ENCODE measurements at regions of chr2 and their contacts with region 1.

Region 1: DNA sequence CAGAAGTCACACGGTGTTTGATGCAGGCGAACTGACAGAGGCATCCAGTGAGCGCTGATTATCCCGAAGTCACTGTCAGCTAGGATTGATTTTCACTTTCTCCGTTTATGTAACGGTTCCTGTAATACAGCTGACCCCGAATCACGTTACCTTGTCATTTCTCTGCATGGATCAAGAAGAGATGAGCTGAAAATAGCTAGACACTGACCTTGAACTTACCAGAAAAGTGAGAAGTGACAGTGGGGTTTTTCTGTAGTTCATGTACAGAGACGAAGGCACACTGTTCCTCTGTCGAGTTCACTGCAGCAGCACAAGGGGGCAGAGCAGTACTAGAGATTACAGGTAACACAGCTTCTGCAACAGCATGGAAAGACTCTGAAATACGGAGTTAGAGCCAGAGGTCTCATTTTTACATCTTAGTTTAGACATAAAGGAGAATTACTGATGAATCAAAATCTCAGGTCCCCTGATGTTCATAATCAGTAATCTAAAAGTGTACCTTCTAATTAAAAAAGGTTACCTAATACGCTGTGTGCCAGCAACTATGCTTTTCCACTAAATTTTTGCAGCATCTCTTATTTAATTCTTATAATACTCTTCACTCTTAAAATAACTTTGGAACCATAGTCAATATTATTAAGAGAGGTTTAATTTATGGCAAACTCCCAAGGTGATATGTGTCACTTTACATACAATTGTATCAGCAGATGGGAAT is 33.1 kb downstream of the ARHGAP15 start:
- DNase-seq: peak; percentile 39
- H3K4me3 Mint-ChIP-seq: no peak overlapping the region
- H3K27ac Mint-ChIP-seq: peak overlapping the region; percentile 20
- H3K4me1 Mint-ChIP-seq: peaks cover 83% of the 10 kb centered on the region
- H3K27me3 Mint-ChIP-seq: no peaks in the 10 kb centered on the region

Region 2: DNA sequence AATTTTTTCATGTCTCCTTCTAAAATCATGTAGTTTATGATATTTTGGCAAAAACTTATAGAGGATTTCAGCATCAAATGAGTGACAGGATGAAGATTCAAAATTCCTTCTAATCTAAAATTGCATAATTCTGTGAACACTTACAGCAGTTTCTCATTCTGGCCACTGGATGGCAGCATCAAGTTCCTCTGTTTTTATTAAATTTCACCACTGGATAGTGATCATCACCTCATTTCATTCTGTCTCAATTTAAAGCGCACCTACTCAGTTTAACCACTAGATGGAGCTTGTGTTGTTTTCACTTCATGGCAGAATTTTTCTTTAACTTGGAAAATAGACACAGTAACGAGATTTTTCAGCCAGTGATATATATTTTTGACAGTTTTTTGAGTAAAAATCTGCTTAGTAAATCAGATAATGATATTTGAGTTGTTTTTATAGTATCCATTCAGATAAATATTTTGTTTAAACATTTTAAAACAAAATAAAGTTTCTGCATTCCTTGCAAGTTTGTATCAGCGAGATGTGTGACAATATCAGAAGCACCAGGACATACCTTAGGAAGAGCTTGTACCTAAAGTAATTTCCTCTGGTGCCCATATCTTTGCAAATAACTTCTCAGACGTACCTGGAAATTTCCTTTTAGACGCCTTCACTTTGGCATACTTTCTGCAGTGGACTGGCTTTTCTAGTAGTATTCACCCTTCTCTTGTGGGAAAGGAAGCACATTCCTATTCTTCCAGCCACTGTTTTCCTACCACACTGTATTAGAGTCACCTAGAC is 127.8 kb before region 1 on chr2:
- intact Hi-C with region 1: loop called (anchors 1 kb)
- DNase-seq: peak; percentile 48
- H3K4me3 Mint-ChIP-seq: no peak overlapping the region
- H3K27ac Mint-ChIP-seq: no peak overlapping the region
- H3K4me1 Mint-ChIP-seq: peaks cover 9% of the 10 kb centered on the region
- H3K27me3 Mint-ChIP-seq: no peaks in the 10 kb centered on the region

Region 3: DNA sequence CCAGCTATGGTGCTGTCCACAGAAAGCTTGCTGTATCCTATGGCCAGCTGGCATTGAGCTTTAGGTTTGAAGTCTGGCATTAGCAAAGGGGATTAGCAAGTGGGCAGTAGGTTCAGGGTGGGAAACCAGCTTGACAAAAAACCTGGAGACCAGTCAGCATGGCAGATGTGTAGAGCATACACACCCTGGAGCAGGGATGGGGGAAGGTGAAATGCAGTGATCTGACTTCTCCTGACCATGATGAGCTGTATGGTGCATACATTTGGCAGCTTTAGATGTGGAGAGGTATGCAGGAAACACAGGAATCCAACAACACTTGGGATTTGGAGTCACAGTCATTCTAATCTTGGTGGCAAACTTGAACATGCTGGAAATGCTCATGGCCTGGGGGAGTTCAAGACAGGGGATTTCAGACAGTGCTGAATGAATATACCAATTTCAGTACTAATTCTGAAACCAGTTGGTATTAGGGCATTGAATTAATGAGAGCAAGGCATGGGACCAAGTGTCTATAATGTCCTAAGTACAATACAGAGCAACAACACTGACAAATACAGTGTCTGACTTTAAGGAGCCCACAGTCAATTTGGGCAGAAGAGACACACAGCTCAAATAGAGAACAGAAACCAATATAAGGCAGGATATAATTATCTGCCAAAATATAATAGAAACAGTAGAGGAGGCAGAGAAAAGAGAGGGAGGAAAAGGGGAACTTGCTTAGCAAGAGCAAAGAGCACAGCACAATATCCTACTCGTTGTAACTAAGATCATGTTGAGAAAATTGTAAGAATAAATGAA is 21.2 kb before region 1 on chr2:
- intact Hi-C with region 1: loop called (anchors 2 kb)
- DNase-seq: no peak
- H3K4me3 Mint-ChIP-seq: no peak overlapping the region
- H3K27ac Mint-ChIP-seq: peak overlapping the region; percentile 84
- H3K4me1 Mint-ChIP-seq: peaks cover 93% of the 10 kb centered on the region
- H3K27me3 Mint-ChIP-seq: no peaks in the 10 kb centered on the region

Region 4: DNA sequence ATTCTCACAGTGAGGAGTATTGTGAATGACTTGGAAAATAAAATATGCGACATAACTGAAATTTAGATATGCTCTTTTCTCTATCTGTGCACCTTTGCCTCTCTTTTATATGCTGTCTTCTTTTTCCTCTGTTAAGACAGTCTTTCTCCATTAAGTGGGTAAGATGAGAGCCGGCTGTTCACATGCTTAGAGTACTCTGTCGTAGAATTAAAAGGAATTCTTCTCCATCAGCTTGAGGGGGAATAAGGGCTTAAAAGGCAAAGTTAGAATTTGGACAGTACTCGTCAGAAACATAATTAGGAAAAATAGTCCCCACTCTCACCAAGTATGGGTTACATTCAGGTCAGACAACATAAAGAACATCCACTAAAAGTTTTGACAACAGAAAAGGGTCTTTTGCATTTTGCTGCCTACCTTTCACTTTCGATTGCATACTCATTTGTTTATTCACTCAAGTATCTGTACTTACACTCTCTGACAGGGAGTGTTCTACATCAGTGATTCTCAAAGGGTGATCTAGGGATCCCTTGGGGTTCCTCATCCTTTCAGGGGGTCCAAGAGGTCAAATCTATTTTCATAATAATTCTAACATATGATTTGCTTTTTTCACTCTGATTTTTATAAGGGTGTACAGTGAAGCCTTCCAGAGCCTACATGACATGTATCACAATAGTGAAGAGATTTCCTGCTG is 15.0 kb after region 1 on chr2:
- intact Hi-C with region 1: loop called (anchors 2 kb)
- DNase-seq: no peak
- H3K4me3 Mint-ChIP-seq: peak overlapping the region; percentile 78
- H3K27ac Mint-ChIP-seq: peak overlapping the region; percentile 85
- H3K4me1 Mint-ChIP-seq: peaks cover 53% of the 10 kb centered on the region
- H3K27me3 Mint-ChIP-seq: no peaks in the 10 kb centered on the region

Region 5: GRCh38 chr2:143205106-143205764 is 43.0 kb after region 1 on chr2:
- intact Hi-C with region 1: loop called (anchors 2 kb)
- DNase-seq: no peak
- H3K4me3 Mint-ChIP-seq: no peak overlapping the region
- H3K27ac Mint-ChIP-seq: peak overlapping the region; percentile 41
- H3K4me1 Mint-ChIP-seq: peaks cover 44% of the 10 kb centered on the region
- H3K27me3 Mint-ChIP-seq: no peaks in the 10 kb centered on the region

Region 6: GRCh38 chr2:143217512-143218115 is 55.3 kb after region 1 on chr2:
- intact Hi-C with region 1: loop called (anchors 1 kb)
- DNase-seq: no peak
- H3K4me3 Mint-ChIP-seq: no peak overlapping the region
- H3K27ac Mint-ChIP-seq: peak overlapping the region; percentile 61
- H3K4me1 Mint-ChIP-seq: peaks cover 51% of the 10 kb centered on the region
- H3K27me3 Mint-ChIP-seq: no peaks in the 10 kb centered on the region

Region 7: GRCh38 chr2:143284087-143284675 is 121.9 kb after region 1 on chr2:
- intact Hi-C with region 1: loop called (anchors 1 kb)
- DNase-seq: no peak
- H3K4me3 Mint-ChIP-seq: no peak overlapping the region
- H3K27ac Mint-ChIP-seq: no peak overlapping the region
- H3K4me1 Mint-ChIP-seq: peaks cover 30% of the 10 kb centered on the region
- H3K27me3 Mint-ChIP-seq: no peaks in the 10 kb centered on the region